Left cardiac atrium (tissue), 4 donors: ENCODE measurements at regions of chr12 and their contacts with region 1.

Region 1: GRCh38 chr12:115752913-115753726 is 524.4 kb downstream of the MED13L start:
- DNase-seq: peak; percentile 24
- ATAC-seq: peak; percentile 81 to 92

Region 2: GRCh38 chr12:114662512-114663177 is 1090.5 kb before region 1 on chr12:
- intact Hi-C with region 1: loop called (anchors 1 to 2 kb)
- DNase-seq: peak; percentile 76
- ATAC-seq: peak; percentile 67 to 71

Region 3: GRCh38 chr12:114668151-114668885 is 1084.8 kb before region 1 on chr12:
- intact Hi-C with region 1: loop called (anchors 2 kb)
- DNase-seq: peak; percentile 77
- ATAC-seq: peak; percentile 89

Region 4: DNA sequence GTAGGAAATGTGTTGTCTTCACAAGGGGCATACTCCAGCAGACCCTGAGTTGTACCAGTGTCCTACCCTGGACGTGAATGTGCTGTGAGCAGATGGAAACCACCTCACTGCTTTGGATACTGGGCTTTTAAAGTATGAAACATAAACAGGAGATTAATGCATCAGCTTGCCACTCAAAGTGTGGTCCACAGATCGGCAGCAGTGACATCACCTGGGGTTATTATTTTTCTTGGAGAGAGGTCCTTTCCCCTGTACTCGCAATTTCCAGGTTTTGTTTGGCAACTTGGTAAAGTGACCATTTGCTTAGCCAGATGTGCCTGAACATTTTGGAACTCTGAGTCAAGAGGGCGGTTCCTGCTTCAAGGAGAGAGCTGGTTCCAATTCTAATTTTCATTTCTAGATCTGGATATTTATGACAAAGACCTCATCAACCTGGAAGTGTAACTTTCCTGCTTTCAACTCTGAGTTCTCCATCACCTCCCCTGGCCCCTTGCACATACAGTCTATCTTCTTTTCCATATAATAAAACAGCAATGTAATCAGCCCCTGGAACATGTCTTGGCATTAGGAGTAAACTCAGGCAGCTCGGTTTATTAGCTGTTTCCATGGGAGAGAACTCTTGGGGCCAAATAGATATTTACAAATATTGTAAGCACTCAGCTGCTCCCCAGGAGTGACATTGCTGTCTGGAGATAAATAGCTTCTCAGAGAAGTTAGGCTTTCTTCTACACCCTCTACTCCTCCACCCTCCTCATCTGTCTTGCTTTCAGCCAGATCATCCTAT is 832.2 kb before region 1 on chr12:
- intact Hi-C with region 1: loop called in 1 of 2 experiments (anchors 10 kb)
- DNase-seq: no peak
- ATAC-seq: peak; percentile 27 to 82

Region 5: DNA sequence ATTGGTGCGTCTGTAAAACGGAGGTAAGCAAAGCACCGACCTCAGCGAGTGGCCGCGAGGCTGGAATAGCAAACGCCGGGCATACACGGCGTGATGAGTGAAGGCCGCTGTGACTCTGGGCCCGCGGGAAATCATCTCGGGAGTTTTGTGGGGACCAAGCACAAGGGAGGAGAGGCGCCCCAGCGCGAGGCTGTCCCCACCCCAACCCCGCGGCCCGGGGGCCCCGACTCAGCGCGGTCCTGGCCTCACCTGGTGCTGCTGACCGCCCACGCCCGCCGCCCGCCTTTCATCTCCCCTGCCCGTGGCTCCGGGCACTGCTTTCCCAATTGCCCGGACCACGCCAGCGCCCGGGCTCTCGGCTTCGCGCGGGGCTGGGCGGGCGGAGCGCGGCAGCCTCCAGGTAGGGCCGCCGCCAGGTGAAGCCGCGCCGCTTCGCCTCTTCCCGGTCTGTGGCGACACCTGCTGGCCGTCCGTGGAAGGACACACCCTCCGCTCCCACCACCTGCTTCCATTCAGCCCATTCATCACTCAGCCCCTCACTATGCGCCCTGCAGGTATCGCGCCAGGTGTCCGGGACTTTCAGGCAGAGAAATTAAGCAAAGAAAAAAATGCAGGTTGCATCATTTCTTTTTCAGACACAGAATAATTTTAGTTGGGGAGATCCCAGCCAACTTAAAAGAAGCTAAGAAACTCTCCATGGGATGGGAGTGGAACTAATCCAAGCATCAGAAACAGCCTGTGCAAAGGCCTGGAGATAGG is 164.0 kb after region 1 on chr12:
- intact Hi-C with region 1: loop called in 1 of 2 experiments (anchors 5 kb)
- DNase-seq: peak; percentile 50
- ATAC-seq: peak; percentile 74 to 81

Region 6: GRCh38 chr12:116142936-116143898 is 390.1 kb after region 1 on chr12:
- intact Hi-C with region 1: no loop called
- DNase-seq: no peak
- ATAC-seq: peak in 1 of 2 donors; percentile 25